ENCODE measurements at regions of chr2 and their contacts with region 1.

Region 1: DNA sequence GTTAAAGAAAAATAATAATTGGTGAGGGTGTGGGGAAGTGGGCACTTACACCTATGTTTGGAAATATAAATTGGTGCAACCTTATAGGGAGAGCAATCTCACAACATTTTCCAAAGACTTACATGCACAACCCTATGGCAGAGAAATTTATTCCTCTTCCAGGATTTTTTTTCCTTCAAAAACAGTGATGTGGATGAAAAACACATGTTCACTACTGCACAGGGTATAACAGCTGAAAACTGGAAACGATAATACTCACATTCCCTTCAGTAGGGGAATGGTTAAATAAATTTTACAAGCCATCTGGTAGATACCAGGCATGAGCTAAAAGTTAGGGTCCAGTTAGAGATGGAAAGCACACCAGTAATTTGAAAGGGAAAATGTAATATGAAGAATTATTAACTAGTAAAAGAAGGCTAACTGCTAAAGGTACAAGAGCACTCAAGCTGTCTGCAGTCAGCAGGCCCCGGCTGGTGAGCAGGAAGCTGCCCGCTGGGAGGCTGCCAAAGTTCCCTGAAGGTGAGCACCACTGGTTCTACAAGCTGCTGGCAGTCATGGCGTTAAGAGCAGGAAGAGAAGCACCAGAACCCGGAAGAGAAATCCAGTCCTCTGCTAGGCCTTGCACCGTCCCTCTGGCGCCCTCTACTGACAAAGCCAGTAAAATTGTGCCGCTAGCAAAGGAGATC is 28.4 kb upstream of the CASP8 start:
- DNase-seq: peak; percentile 93
- H3K4me3 ChIP-seq: no peak overlapping the region
- H3K27ac ChIP-seq: peak overlapping the region; percentile 22
- H3K4me1 ChIP-seq: peaks cover 10% of the 10 kb centered on the region
- H3K27me3 ChIP-seq: no peaks in the 10 kb centered on the region
- CTCF ChIP-seq: peak; percentile 89 to 92
- POLR2A ChIP-seq: peak; percentile 51

Region 2: GRCh38 chr2:201158111-201158929 is 73.6 kb before region 1 on chr2:
- CTCF ChIA-PET with region 1: interaction called, 14 read pairs
- POLR2A ChIA-PET with region 1: interaction called, 3 read pairs
- dilution Hi-C with region 1: no loop called
- intact Hi-C with region 1: no loop called
- DNase-seq: peak; percentile 89
- H3K4me3 ChIP-seq: no peak overlapping the region
- H3K27ac ChIP-seq: peak overlapping the region; percentile 54
- H3K4me1 ChIP-seq: peaks cover 14% of the 10 kb centered on the region
- H3K27me3 ChIP-seq: no peaks in the 10 kb centered on the region
- CTCF ChIP-seq: peak; percentile 64 to 77
- POLR2A ChIP-seq: no peak

Region 3: DNA sequence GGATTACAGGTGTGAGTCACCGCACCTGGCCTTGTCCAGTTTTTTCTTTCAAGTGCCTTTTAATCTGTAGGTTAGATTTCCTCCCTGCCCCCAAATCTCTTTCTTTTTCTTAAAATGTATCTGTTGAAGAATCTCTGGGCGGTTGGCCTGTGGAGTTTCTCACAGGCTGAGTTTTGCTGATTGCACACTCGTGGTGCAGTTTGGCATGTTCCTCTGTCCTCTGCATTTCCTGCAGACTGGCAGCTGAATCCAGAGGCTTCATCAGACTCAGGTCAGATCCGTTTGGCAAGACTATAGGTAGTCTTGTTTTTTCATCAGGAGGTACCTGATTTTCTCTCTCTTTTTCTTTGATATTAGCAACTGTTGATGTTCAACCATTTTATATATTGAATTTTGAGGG is 43.5 kb before region 1 on chr2:
- CTCF ChIA-PET with region 1: interaction called, 331 read pairs
- POLR2A ChIA-PET with region 1: interaction called, 13 read pairs
- dilution Hi-C with region 1: no loop called
- intact Hi-C with region 1: loop called (anchors 1 kb)
- DNase-seq: no peak
- H3K4me3 ChIP-seq: no peak overlapping the region
- H3K27ac ChIP-seq: no peak overlapping the region
- H3K4me1 ChIP-seq: peaks cover 50% of the 10 kb centered on the region
- H3K27me3 ChIP-seq: no peaks in the 10 kb centered on the region
- CTCF ChIP-seq: no peak
- POLR2A ChIP-seq: no peak

Region 4: DNA sequence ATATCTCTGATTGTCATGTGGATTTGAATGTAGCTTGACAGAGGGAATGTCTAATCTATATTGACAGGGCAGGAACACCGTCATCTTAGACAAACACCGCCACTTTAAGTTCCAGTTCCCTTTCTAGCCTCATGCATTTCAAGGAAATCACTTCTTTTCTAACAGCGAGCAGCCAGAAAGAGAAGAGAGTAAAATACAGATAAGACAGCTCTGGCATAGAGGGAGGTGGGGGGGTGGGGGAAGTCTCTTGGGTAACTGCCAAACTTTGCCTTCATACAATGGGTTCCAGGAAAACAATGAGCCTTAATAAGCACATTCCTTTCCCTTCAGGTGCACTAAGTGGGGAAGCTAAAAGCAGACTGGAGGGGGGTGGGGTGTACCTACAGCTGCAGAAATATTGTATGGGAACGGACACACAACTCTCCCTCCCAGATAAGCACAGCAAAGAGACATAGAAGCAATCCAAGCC is 11.8 kb before region 1 on chr2:
- CTCF ChIA-PET with region 1: interaction called, 71 read pairs
- POLR2A ChIA-PET with region 1: interaction called, 5 read pairs
- dilution Hi-C with region 1: no loop called
- intact Hi-C with region 1: no loop called
- DNase-seq: peak; percentile 92
- H3K4me3 ChIP-seq: no peak overlapping the region
- H3K27ac ChIP-seq: peak overlapping the region; percentile 53
- H3K4me1 ChIP-seq: peaks cover 26% of the 10 kb centered on the region
- H3K27me3 ChIP-seq: no peaks in the 10 kb centered on the region
- CTCF ChIP-seq: no peak
- POLR2A ChIP-seq: no peak

Region 5: GRCh38 chr2:201357241-201357640 is 125.3 kb after region 1 on chr2 and contains the start of gene FLACC1:
- CTCF ChIA-PET with region 1: interaction called, 58 read pairs
- POLR2A ChIA-PET with region 1: no interaction called
- dilution Hi-C with region 1: no loop called
- intact Hi-C with region 1: no loop called
- DNase-seq: peak; percentile 24
- H3K4me3 ChIP-seq: no peak within 1 kb of the TSS
- H3K27ac ChIP-seq: no peak within 1 kb of the TSS
- H3K4me1 ChIP-seq: no peaks in the 10 kb centered on the region
- H3K27me3 ChIP-seq: no peaks in the 10 kb centered on the region
- CTCF ChIP-seq: no peak
- POLR2A ChIP-seq: no peak
- total RNA-seq, gene FLACC1: 1.4 TPM in 2 replicates

Region 6: DNA sequence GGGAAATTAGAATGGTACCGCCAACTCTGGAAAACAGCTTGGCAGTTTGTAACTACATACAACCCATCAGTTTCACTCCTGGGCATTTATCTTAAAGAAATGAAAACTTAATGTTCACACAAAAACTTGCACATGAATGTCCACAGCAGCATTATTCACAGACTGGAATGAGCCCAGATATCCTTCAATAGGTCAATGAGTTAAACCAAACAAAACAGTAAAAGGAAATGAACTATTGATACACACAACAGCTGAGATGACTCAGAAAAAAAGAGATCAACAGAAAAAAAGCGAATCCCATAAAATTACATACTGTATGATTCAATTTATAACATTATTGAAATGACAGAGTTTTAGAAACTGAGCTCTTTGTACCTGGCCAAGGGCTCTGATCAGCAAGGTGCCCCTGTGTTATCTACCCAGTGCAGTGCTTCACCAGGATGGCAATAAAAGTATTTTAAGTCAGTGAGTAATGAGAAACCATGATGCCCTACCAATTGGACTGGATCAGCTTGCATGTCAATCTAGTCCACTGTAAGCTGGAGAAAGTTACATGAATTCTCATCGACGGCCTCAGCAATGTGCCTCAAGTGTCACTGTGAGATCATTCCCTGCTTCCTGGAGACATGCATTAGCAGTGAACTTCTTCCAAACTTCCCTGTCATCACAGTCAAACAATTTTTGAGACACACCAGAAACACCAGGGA is 389.5 kb after region 1 on chr2:
- CTCF ChIA-PET with region 1: interaction called, 21 read pairs
- POLR2A ChIA-PET with region 1: no interaction called
- dilution Hi-C with region 1: no loop called
- intact Hi-C with region 1: loop called (anchors 1 kb)
- DNase-seq: peak; percentile 89
- H3K4me3 ChIP-seq: peak overlapping the region in 1 of 3 experiments; percentile 20
- H3K27ac ChIP-seq: peak overlapping the region; percentile 74
- H3K4me1 ChIP-seq: peaks cover 26% of the 10 kb centered on the region
- H3K27me3 ChIP-seq: no peaks in the 10 kb centered on the region
- CTCF ChIP-seq: no peak
- POLR2A ChIP-seq: peak; percentile 61